Activated naive CD4-positive, alpha-beta T cell treated with anti-CD3 and anti-CD28 coated beads for 36 hours (primary cell): ENCODE measurements at regions of chr2 and their contacts with region 1.

Region 1: GRCh38 chr2:210617732-210618330 is 61.4 kb downstream of the CPS1 start:
- DNase-seq: peak; percentile 9
- H3K4me3 Mint-ChIP-seq: no peak overlapping the region
- H3K27ac Mint-ChIP-seq: no peak overlapping the region
- H3K4me1 Mint-ChIP-seq: no peaks in the 10 kb centered on the region
- H3K27me3 Mint-ChIP-seq: no peaks in the 10 kb centered on the region

Region 2: DNA sequence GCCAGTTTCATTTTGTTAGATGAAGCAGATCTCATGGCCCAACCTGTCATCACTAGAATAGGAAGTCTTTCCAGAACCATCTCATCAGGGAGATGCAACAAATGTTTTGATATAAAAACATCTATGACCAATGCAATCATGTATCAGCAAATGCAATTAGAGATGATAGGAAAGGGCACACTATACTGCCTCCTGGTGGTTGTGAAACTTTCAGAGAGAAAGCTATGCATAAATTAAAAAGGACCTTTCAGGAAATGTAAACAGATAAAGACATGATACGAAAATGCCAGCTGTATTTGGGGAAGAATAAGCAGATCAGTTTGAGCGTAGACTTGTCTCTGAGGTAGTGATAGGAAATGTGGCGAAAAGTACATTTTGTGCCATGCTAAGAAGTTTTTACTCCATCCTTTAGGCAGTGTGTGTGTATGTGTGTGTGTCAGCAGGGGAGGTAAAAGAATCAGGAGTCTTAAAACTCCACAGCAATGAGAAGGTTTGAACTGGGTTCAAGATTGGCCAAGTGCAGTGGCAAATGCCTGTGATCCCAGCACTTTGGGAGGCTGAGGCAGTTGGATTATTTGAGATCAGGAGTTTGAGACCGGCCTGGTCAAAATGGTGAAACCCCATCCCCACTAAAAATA is 417.8 kb after region 1 on chr2:
- CTCF ChIA-PET with region 1: no interaction called
- intact Hi-C with region 1: loop called (anchors 1 kb)
- DNase-seq: no peak
- H3K4me3 Mint-ChIP-seq: no peak overlapping the region
- H3K27ac Mint-ChIP-seq: no peak overlapping the region
- H3K4me1 Mint-ChIP-seq: no peaks in the 10 kb centered on the region
- H3K27me3 Mint-ChIP-seq: no peaks in the 10 kb centered on the region

Region 3: GRCh38 chr2:211302676-211303075 is 684.8 kb after region 1 on chr2:
- CTCF ChIA-PET with region 1: no interaction called
- intact Hi-C with region 1: no loop called
- DNase-seq: no peak
- H3K4me3 Mint-ChIP-seq: no peak overlapping the region
- H3K27ac Mint-ChIP-seq: no peak overlapping the region
- H3K4me1 Mint-ChIP-seq: no peaks in the 10 kb centered on the region
- H3K27me3 Mint-ChIP-seq: no peaks in the 10 kb centered on the region